A549 (cell line): ENCODE measurements at regions of chr17 and their contacts with region 1.

Region 1: DNA sequence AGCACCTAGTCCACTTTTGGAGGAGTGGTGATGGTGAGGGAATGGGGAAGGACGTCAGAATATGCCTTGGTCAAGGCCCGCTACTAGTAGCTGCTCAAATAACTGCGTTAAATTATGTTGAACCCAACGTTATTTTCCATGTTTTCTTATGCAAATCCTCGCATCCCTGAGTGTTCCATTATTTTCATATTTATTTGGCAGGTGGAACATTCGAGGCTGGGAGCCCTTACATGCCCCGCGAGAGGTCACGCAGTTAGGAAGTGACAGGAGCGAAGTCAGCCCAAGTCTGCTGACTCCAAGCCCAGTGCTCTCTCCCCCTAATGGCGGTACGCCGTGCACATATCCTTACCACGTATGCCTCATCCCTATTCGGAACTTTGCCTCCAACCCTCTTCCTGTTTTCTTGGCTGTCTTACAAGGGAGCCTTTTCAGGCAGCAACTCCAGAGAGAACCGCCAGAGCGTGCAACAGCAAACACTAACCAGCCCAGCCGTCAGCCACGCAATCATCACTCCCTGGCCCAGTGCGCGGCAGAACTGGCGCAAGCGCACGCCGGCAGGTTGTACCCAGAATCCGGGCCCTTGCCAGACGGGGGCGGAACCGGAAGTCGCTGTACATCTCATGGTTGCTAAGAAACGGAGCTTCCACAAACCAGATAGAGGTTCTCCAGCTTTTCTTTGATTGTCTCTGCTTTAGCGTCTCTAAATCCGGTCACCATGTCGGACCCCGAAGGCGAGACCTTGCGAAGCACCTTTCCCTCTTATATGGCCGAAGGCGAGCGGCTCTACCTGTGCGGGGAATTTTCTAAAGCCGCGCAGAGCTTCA is at the start of gene ODAD4:
- DNase-seq: peak; percentile 98 to 99
- ATAC-seq: peak; percentile 99
- H3K4me3 ChIP-seq: peak within 1 kb of the TSS; percentile 55
- H3K27ac ChIP-seq: peak within 1 kb of the TSS; percentile 76 to 89
- H3K4me1 ChIP-seq: peaks cover 35% of the 10 kb centered on the region
- CTCF ChIP-seq: peak; percentile 45
- EP300 ChIP-seq: no peak; a peak in 1 of 5 replicates
- POLR2A ChIP-seq: peak; percentile 90
- RAD21 ChIP-seq: peak; percentile 49 to 56; a peak in 4 of 5 replicates
- polyA plus RNA-seq, gene ODAD4: 2.0 and 2.3 TPM in 2 replicates

Region 2: DNA sequence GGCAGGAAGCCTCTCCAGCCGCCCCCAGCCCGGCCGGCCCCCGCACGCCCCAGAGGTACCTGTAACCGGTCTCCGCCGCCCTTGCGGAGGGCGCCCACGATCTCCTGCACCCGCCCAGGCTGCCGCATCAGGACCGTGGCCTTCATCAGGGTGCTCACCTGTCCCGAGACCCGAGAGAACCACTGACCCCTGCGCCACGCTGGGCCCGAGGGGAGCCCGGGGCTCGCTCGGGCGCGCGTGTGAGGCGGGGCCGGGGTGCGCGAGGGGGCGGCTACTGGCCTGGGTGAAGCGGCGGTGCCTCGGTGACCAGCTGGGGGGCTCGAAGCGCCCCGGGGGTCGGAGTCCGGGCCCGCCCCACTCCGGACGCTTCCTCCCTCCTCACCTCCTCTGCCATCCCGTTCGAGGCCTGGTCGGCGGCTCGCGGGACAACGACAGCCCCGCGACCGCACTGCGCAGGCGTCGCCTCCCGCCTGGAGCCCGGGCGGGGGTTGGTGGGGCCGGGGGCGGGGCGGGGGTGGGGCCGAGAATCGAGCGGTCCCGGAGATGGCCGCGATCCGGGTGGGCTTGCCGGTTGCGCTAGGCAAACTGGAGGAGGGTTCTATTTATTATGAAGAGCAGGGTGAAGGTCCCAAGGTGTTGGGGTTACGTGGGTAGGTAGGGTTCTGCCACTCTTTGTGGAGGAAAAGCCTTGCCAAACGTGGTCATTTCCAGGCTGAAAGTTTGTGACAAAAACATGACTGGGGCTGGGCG is 94.2 kb before region 1 on chr17 and contains the start of gene NT5C3B:
- CTCF ChIA-PET with region 1: no interaction called
- POLR2A ChIA-PET with region 1: interaction called, 10 read pairs
- DNase-seq: peak; percentile 60 to 93
- ATAC-seq: peak; percentile 94
- H3K4me3 ChIP-seq: peak within 1 kb of the TSS; percentile 74
- H3K27ac ChIP-seq: peak within 1 kb of the TSS; percentile 87 to 97
- H3K4me1 ChIP-seq: peaks cover 13% of the 10 kb centered on the region
- CTCF ChIP-seq: no peak
- EP300 ChIP-seq: no peak
- POLR2A ChIP-seq: peak; percentile 85
- RAD21 ChIP-seq: no peak
- polyA plus RNA-seq, gene NT5C3B: 167 and 171 TPM in 2 replicates

Region 3: GRCh38 chr17:41918314-41919164 is 11.7 kb before region 1 on chr17 and contains the start of gene ACLY:
- CTCF ChIA-PET with region 1: interaction called, 17 read pairs
- POLR2A ChIA-PET with region 1: interaction called, 47 read pairs
- DNase-seq: peak; percentile 98
- ATAC-seq: peak; percentile 39 to 93
- H3K4me3 ChIP-seq: peak within 1 kb of the TSS; percentile 94
- H3K27ac ChIP-seq: peak within 1 kb of the TSS; percentile 93 to 95
- H3K4me1 ChIP-seq: peaks cover 52% of the 10 kb centered on the region
- CTCF ChIP-seq: no peak
- EP300 ChIP-seq: no peak
- POLR2A ChIP-seq: peak; percentile 97
- RAD21 ChIP-seq: 0 out of 5 replicates have a peak, but pooled peaks of 1 of the 2 experiments have one; percentile 33
- polyA plus RNA-seq, gene ACLY: 367 and 376 TPM in 2 replicates

Region 4: DNA sequence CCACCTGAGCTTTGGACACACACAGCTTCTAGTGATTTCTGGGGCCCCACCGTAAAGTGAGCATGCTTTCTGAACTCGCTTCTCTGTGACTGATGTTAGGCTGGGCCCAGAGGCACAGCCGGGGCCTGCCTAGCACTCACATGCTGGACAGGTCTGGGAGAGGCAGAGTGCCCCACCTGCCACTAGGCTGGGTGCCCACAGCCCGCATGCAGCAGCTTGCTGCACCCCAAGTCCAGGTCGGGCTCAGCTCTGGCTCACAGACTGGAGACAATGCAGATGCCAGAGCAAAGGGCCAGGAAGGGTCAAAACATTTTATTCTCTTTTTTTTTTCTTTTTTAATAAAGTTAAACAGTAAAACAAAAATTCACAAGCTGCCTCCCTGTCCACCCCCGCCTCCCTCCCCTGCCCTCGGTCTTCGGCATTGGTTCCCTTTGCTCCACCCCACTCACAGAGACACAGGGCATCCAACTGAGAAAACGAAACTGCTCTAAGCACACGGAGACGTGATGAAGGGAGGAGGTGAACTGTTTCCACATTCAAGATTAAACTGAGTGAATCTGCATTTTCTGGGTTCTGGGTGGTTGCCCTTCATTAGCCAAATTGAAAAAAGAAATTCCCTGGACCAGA is 46.0 kb after region 1 on chr17:
- CTCF ChIA-PET with region 1: no interaction called
- POLR2A ChIA-PET with region 1: no interaction called
- DNase-seq: no peak
- ATAC-seq: no peak
- H3K4me3 ChIP-seq: no peak overlapping the region
- H3K27ac ChIP-seq: no peak overlapping the region
- H3K4me1 ChIP-seq: 0 out of 3 replicates have a peak, but pooled peaks cover 7% of the 10 kb centered on the region
- CTCF ChIP-seq: no peak
- EP300 ChIP-seq: no peak
- POLR2A ChIP-seq: no peak
- RAD21 ChIP-seq: no peak